Gastrocnemius medialis (tissue), 4 donors: ENCODE measurements at regions of chr14 and their contacts with region 1.

Region 1: DNA sequence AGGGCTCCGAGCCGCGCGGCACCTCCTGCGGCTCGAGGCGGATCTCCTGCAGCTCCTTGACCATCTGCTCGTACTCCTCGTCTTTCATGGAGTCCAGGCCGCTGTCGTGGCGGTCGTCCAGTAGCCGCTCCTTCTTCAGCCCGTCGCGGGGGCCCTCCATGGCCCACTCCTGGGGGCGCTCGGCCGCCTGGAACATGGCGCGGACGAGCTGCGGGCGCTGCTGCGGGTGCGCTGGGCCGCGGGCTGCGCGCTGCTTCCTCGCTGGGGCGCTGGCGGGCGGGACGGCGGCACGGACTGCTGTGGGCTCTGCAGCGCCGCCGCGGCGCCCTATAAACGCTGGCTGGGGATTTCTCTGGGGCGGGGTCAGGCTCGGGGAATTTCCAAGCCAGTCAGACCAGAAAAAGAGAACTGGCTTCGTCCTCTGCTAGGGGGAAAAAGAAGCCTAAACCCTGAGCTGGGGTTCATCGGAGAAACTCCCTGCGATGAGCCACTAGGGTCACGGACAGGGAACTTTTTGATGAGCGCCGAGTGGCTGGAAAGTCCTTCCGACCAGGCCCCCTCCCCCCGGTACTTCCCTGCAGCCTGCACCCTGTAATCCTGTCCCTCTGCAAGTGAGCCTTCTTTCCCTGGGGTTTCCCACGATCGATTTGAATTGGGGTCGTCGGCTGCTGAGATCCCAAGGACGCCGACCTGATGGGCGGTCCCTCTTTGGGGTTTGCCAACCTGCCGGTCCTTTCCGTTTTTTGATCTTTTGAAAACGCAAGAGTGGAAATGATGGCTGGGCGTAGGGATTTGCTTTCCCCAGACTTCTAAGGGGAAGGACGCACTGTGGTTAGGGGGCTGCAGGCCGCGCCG is at the start of gene NFKBIA:
- DNase-seq: peak; percentile 86 to 91
- ATAC-seq: peak; percentile 52 to 59
- H3K4me3 ChIP-seq: peak within 1 kb of the TSS; percentile 66 to 88 (median 85)
- H3K27ac ChIP-seq: peak within 1 kb of the TSS; percentile 94 to 99 (median 99)
- H3K4me1 ChIP-seq: peaks cover 31 to 38% of the 10 kb centered on the region in 2 donors
- H3K27me3 ChIP-seq: no peaks in the 10 kb centered on the region
- CTCF ChIP-seq: peak in 4 of 5 experiments; percentile 15 to 44 (median 26)
- POLR2A ChIP-seq: peak; percentile 99
- total RNA-seq, gene NFKBIA: 185 to 379 (median 320) TPM

Region 2: DNA sequence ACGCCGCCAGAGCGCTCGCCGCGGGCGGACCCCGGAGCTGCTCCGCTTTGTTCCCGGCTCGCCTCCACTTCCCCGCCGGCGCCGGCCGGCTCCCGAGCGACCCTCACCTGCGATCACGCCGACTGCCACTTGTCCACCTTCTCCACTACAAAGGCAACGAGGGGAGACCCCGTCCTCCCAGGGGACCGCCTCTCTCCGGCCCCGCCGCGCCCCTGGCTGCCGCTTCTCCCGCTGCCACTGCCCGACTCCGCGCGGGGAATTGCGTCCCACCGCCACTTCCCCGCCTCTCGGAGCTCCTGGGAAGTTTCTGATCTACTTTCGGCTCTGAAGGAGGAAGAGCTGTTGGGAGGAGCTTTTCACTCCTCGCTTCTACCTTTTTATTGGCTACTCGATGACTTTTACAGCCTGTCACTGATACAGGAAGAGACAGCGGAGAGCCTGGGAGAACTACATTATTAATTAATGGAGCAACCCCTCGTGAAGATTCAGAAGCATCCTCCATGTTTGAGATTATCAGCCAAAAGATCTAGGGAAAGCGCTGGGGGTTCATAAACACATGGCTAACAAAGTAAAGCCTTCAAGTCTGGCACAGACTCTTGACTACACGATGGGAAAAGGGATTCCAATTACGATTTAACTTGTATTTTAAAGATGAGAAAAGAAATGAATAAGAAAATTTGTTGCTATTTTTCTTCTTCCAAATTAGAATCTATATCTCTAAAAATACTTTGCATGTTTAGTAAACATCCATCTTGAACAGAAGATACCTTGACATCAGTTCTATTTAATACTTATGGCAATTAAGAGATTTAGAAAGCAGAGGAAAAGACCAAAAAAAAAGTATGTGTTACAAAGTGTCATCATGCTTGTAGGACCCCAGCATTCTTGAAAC is 529.4 kb before region 1 on chr14 and contains the start of gene BAZ1A:
- in situ Hi-C with region 1: no loop called
- intact Hi-C with region 1: loop called (anchors 10 kb)
- DNase-seq: peak; percentile 42 to 61
- ATAC-seq: peak; percentile 62
- H3K4me3 ChIP-seq: peak within 1 kb of the TSS; percentile 82 to 98 (median 90)
- H3K27ac ChIP-seq: peak within 1 kb of the TSS; percentile 98 to 100 (median 100)
- H3K4me1 ChIP-seq: peaks cover 16 to 17% of the 10 kb centered on the region in 2 donors
- H3K27me3 ChIP-seq: no peaks in the 10 kb centered on the region
- CTCF ChIP-seq: peak in 3 of 5 experiments; percentile 13 to 42 (median 37)
- POLR2A ChIP-seq: peak; percentile 84 to 95
- total RNA-seq, gene BAZ1A: 11.6 to 18.5 (median 14.7) TPM

Region 3: GRCh38 chr14:35046048-35046741 is 358.5 kb before region 1 on chr14 and contains the start of gene FAM177A1:
- in situ Hi-C with region 1: loop called in 1 of 4 experiments (anchors 25 kb)
- intact Hi-C with region 1: loop called (anchors 2 kb)
- DNase-seq: peak; percentile 95 to 97
- ATAC-seq: peak; percentile 81 to 90
- H3K4me3 ChIP-seq: peak within 1 kb of the TSS; percentile 77 to 94 (median 88)
- H3K27ac ChIP-seq: peak within 1 kb of the TSS; percentile 90 to 98 (median 94)
- H3K4me1 ChIP-seq: peaks cover 37 to 40% of the 10 kb centered on the region in 2 donors
- H3K27me3 ChIP-seq: no peaks in the 10 kb centered on the region
- CTCF ChIP-seq: no peak
- POLR2A ChIP-seq: peak; percentile 91 to 94
- total RNA-seq, gene FAM177A1: 13.5 to 35.8 (median 21.8) TPM

Region 4: DNA sequence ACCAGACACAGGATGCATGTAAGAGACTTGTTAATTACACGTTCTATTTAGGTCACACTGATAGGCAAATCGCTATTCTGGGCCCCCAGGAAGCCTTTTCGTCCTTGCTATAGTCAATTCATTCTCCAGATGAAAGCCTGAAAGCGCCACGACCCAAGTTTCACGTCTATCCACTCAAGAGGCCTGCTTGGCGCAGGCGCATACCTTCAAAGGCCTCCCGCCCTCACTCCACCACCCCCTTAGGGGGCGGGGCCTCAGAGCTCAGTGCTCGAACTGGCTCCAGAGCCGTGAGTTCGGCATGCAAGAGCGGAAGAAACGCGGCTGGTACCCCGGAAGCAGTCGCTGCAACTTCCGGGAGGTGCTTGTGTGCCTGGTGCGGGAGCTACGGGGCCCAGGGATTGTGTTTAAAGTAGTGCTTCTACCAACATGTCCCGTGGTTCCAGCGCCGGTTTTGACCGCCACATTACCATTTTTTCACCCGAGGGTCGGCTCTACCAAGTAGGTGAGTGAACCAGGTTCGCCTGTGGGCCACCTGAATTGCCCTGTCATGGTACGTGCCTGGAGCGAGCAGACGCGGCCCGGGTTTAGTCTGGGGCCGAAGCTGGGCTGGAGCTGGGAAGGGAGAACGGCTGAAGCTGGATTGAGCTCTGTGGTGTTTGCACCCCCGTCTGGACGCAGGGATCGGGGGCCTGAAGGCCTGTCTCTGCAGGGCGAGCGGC is 112.5 kb before region 1 on chr14 and contains the start of gene PSMA6:
- in situ Hi-C with region 1: loop called (anchors 5 to 10 kb)
- intact Hi-C with region 1: loop called (anchors 1 kb)
- DNase-seq: peak; percentile 98 to 99
- ATAC-seq: peak; percentile 95 to 96
- H3K4me3 ChIP-seq: peak within 1 kb of the TSS; percentile 84 to 94 (median 89)
- H3K27ac ChIP-seq: peak within 1 kb of the TSS; percentile 96 to 98 (median 96)
- H3K4me1 ChIP-seq: peaks cover 32 to 39% of the 10 kb centered on the region in 2 donors
- H3K27me3 ChIP-seq: no peaks in the 10 kb centered on the region
- CTCF ChIP-seq: no peak
- POLR2A ChIP-seq: peak; percentile 91
- total RNA-seq, gene PSMA6: 323 to 502 (median 464) TPM

Region 5: DNA sequence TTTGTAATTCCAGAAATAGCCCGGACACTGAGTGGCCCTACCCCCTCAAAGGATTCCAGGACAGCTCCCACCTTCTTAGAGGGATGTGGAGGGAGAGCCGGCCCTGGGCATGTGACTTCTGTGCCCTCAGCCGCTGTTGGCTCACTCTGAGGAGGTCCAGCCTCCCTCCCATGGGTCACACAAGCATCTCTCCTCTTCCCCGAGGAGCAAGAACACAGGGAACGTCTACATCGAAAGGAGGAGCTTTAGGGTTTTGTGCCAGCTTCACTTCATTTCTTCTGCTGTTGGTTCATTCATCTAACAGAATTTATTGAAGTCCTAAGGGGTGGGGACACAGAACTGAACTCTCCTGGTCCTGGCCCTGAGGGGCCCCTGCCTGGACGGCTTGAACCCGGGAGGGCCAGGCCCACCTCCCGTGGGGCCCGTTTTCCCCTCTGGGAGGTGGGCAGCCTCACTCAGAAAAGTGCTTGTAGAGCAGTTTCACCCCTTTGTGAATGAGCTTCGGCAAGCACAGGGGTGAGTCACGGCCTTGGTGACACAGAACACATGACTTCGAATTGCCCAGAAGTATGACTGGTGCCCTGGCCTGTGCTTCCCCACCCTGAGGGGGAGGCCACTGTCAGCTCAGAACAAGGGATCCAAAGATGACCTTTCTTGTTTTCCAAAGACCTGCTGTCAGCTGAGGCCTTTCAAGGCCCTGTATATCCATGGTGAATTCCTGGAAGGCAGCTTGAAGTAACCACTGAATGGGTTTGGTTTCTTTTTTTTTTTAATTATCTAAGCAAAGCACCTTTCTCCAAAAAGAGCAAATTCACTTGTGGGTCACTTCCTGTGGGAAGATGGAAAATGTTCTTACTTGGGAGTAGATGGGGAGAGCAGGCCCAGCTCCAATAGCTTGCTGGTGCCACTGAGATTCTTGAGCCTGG is 39.3 kb before region 1 on chr14:
- in situ Hi-C with region 1: no loop called
- intact Hi-C with region 1: loop called (anchors 2 kb)
- DNase-seq: peak; percentile 51 to 80
- ATAC-seq: peak; percentile 80 to 83
- H3K4me3 ChIP-seq: no peak overlapping the region
- H3K27ac ChIP-seq: peak overlapping the region; percentile 63 to 77 (median 66)
- H3K4me1 ChIP-seq: peaks cover 17 to 28% of the 10 kb centered on the region in 2 donors
- H3K27me3 ChIP-seq: no peaks in the 10 kb centered on the region
- CTCF ChIP-seq: no peak
- POLR2A ChIP-seq: peak in 1 of 2 donors; percentile 54

Region 6: DNA sequence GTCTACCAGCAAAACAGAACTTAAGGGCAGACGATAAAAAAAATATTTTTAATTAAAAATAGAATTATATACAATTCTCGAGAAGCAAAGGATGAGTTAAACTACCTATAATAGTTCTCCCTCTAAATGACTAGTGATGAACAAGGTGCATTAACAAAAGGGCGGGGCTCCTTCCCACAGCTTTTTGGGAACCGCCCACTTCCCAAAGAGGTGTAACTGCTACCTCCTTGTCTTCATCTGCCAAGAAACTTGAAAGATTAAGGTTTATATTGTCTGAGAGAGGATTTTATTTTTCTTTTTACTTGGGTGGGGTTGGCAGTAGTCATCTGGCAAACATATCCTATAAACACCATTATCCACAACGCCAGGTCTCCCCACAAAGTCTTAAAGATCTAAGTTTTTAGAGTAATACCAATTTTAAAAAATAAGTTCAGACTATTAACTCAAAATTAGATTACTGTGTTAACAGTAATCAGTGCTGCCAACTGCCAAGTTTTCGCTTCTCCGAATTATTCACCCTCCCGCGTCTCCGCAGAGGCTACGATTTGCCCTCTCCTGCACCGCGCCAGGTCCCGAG is 403.5 kb after region 1 on chr14:
- in situ Hi-C with region 1: no loop called
- intact Hi-C with region 1: loop called (anchors 10 kb)
- DNase-seq: peak in 1 of 2 donors; percentile 14
- ATAC-seq: peak; percentile 34 to 59
- H3K4me3 ChIP-seq: peak overlapping the region; percentile 56 to 89 (median 74)
- H3K27ac ChIP-seq: peak overlapping the region; percentile 85 to 94 (median 88)
- H3K4me1 ChIP-seq: peaks cover 20 to 22% of the 10 kb centered on the region in 2 donors
- H3K27me3 ChIP-seq: no peaks in the 10 kb centered on the region
- CTCF ChIP-seq: no peak
- POLR2A ChIP-seq: no peak